ENCODE measurements at regions of chr22 and their contacts with region 1.

Region 1: DNA sequence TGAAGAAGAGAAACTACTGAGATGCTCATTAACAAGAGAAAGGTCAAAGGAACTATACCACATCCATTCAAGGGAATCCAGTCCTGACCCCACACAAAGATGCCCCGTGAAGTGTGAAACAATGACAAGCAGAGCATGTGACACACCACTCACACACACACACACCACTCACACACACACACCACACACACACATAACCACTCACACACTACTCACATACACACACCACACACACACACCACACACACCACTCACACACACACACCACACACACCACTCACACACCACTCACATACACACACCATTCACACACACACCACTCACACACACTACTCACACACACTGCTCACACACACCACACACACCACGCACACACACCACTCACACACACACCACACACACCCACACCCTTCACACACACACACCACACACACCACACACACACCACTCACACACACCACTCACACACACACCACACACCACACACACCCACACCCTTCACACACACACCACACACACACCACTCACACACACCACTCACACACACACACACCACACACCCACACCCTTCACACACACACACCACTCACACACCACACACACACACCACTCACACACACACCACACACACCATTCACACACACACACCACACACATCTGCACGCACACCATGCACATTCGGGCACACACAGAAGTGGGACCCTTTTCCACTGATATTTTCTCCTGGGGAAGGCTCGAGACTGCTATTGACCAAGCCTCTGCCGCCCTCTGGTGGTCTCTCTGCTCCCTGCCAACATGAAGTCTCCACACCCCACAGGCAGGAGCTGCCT is 32.0 kb upstream of the COMT start:
- DNase-seq: peak; percentile 92
- ATAC-seq: peak; percentile 92
- H3K4me3 Mint-ChIP-seq: no peak overlapping the region
- H3K27ac Mint-ChIP-seq: peak overlapping the region; percentile 45
- H3K4me1 Mint-ChIP-seq: peaks cover 8% of the 10 kb centered on the region
- H3K27me3 Mint-ChIP-seq: no peaks in the 10 kb centered on the region

Region 2: DNA sequence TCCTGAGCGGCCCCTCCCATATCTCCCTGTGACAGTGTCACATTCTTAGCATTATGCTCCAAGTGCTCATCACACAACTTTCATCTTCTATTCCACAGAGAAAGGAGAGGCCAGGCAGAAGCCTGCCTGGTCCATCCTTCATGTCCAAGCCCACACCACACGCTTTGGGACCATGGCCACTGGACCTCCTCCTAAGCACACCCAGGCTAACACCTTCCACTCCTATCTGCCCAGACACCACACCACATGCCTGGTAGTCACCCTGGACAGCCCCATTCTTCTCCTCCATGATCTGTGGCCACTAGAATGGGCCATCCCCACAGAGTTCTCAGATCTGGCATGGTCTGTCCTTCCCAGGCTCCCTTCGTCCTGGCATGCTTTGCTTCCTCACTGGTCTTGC is 533.3 kb before region 1 on chr22:
- CTCF ChIA-PET with region 1: no interaction called
- POLR2A ChIA-PET with region 1: no interaction called
- intact Hi-C with region 1: no loop called
- DNase-seq: no peak
- ATAC-seq: no peak
- H3K4me3 Mint-ChIP-seq: no peak overlapping the region
- H3K27ac Mint-ChIP-seq: no peak overlapping the region
- H3K4me1 Mint-ChIP-seq: no peaks in the 10 kb centered on the region
- H3K27me3 Mint-ChIP-seq: no peaks in the 10 kb centered on the region

Region 3: DNA sequence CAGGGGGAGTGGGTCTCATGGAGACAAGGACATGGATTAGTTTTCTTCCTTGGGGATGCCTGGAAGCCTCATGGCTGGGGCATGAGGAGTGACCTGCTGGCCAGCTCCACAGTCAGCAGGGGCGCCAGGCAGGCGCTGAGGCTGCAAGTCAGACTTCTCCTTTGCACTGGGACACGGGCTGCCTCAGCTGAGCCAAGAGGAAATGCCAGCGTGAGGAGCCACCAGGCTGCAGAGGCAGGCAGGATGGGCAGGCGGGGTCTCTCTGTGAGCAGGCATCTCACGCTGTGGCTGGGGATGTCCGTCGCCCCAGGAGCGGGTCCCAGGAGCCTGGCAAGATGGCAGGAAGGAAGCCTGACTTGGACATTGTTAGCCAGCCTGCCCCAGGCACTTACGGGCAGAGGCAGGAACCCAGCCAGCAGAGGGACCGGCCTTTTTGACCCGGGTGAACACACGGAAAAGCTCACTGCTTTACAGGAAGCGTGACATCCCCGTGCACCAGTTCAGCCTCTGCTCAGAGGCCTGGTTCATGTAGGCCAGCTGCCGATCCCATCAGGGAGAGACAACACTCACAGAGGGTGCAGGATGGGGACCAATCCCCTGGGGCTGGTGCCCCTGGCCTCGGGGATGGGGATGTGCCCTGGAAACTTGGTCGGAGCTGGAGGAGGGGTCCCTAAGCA is 65.0 kb before region 1 on chr22:
- CTCF ChIA-PET with region 1: no interaction called
- POLR2A ChIA-PET with region 1: no interaction called
- intact Hi-C with region 1: loop called in 1 of 2 experiments (anchors 2 kb)
- DNase-seq: peak; percentile 46
- ATAC-seq: peak; percentile 65
- H3K4me3 Mint-ChIP-seq: peak overlapping the region; percentile 20
- H3K27ac Mint-ChIP-seq: peak overlapping the region; percentile 29
- H3K4me1 Mint-ChIP-seq: peaks cover 19% of the 10 kb centered on the region
- H3K27me3 Mint-ChIP-seq: no peaks in the 10 kb centered on the region

Region 4: GRCh38 chr22:19865141-19865829 is 44.3 kb before region 1 on chr22:
- CTCF ChIA-PET with region 1: interaction called, 11 read pairs
- POLR2A ChIA-PET with region 1: no interaction called
- intact Hi-C with region 1: no loop called
- DNase-seq: no peak
- ATAC-seq: no peak
- H3K4me3 Mint-ChIP-seq: no peak overlapping the region
- H3K27ac Mint-ChIP-seq: no peak overlapping the region
- H3K4me1 Mint-ChIP-seq: no peaks in the 10 kb centered on the region
- H3K27me3 Mint-ChIP-seq: no peaks in the 10 kb centered on the region

Region 5: DNA sequence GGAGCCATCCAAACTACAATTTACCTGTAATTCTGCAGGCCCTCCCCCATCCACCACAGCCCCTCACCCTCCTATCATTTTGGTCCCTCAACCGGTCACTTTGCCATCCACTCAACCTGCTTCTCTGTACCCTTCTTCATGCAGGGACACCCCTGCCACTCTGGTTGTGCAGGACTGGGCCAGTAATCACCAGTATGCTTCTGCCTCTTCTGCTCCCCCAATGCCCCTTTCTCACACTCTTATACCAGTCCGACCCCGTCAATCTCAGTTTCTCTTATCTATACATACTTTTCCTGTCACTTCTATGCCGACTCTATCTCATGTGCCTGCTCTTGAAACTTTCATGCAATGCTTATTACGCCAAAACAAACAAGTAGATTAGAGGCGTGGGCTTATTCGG is 26.9 kb after region 1 on chr22:
- CTCF ChIA-PET with region 1: no interaction called
- POLR2A ChIA-PET with region 1: no interaction called
- intact Hi-C with region 1: no loop called
- DNase-seq: no peak
- ATAC-seq: no peak
- H3K4me3 Mint-ChIP-seq: no peak overlapping the region
- H3K27ac Mint-ChIP-seq: no peak overlapping the region
- H3K4me1 Mint-ChIP-seq: peaks cover 8% of the 10 kb centered on the region
- H3K27me3 Mint-ChIP-seq: no peaks in the 10 kb centered on the region